Right lobe of liver (tissue), 6 donors: ENCODE measurements at regions of chr10 and their contacts with region 1.

Region 1: DNA sequence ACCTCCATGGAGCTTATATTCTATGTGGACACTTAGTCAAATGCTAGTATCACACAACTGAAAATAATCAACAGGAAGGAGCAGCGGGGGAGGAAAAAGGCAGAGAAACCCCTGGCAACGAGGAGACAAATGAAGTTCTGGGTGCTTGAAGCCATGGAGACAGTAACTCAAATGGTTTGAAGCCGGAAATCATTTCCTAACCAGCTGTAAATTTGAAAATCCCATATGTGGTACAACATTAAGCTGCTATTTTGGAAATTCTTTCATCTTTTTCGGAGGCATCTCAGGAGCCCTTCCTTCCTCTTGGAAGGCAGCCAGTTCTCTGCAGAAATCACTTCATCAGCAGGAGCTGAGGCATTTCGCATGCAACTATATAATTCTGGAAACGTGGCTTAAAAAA is 91.4 kb downstream of the PPP1R3C start:
- DNase-seq: no peak
- ATAC-seq: no peak
- H3K4me3 ChIP-seq: no peak overlapping the region
- H3K27ac ChIP-seq: no peak overlapping the region
- H3K4me1 ChIP-seq: peaks cover 0 to 17% (median 5%) of the 10 kb centered on the region in 4 donors
- H3K27me3 ChIP-seq: no peaks in the 10 kb centered on the region
- CTCF ChIP-seq: no peak
- POLR2A ChIP-seq: no peak

Region 2: GRCh38 chr10:91313796-91314485 is 227.5 kb before region 1 on chr10:
- intact Hi-C with region 1: no loop called
- DNase-seq: no peak
- ATAC-seq: no peak
- H3K4me3 ChIP-seq: no peak overlapping the region
- H3K27ac ChIP-seq: no peak overlapping the region
- H3K4me1 ChIP-seq: no peaks in the 10 kb centered on the region
- H3K27me3 ChIP-seq: no peaks in the 10 kb centered on the region
- CTCF ChIP-seq: no peak
- POLR2A ChIP-seq: no peak

Region 3: DNA sequence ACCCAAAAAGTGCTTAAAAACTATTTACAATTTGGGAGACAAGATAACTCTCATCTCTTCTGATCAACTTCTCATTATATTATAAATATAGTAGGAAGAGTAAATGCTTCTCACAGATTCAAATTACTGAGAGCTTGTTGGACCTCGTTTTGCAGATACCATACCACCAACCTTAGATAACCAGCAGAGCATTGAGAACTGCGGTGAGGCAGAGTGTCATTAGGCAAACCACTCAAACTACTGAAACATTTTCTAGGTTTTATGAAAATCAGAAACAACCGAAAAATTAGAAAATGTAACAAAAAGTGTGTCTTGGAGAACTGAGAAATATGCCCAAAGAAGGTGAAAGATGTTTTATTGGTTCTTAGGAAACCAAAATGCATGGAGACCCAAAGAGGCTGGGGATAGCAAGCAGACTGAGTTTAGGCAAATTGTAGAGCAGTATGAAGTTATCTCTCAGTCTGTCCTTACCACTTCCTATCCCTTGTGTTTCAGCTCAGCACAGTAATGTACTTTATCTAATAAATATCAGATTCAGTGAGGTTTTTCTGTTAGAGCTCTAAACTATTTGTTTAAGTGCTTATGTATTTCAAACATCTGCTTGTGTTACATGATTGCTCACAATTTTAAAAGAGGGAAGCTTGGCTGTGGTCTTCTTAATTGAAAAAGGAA is 53.4 kb before region 1 on chr10:
- intact Hi-C with region 1: loop called (anchors 10 kb)
- DNase-seq: no peak
- ATAC-seq: no peak
- H3K4me3 ChIP-seq: no peak overlapping the region
- H3K27ac ChIP-seq: no peak overlapping the region
- H3K4me1 ChIP-seq: no peaks in the 10 kb centered on the region
- H3K27me3 ChIP-seq: no peaks in the 10 kb centered on the region
- CTCF ChIP-seq: no peak
- POLR2A ChIP-seq: no peak

Region 4: DNA sequence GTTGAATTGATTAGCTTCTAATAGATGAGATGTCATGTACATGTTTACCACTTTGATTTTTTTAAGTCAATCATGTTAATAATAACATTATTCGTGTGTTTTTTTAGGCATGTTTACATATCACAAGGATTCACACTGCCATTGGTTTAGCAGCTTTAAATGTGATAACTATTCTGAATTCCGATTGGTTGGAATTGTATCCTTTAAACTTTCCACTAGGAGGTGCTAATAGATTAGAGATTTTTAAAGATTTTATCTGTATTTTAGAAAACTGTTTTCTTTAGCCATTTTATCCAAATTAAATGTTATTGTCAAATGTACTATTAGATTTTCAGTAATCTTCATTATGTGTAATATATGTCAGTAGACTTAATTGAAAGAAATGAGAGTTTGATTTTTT is 48.2 kb before region 1 on chr10:
- intact Hi-C with region 1: loop called (anchors 10 kb)
- DNase-seq: no peak
- ATAC-seq: peak; percentile 44 to 74 (median 71)
- H3K4me3 ChIP-seq: no peak overlapping the region
- H3K27ac ChIP-seq: no peak overlapping the region
- H3K4me1 ChIP-seq: no peaks in the 10 kb centered on the region
- H3K27me3 ChIP-seq: no peaks in the 10 kb centered on the region
- CTCF ChIP-seq: peak; percentile 49 to 60 (median 58)
- POLR2A ChIP-seq: no peak